ENCODE measurements at regions of chr1 and their contacts with region 1.

Region 1: DNA sequence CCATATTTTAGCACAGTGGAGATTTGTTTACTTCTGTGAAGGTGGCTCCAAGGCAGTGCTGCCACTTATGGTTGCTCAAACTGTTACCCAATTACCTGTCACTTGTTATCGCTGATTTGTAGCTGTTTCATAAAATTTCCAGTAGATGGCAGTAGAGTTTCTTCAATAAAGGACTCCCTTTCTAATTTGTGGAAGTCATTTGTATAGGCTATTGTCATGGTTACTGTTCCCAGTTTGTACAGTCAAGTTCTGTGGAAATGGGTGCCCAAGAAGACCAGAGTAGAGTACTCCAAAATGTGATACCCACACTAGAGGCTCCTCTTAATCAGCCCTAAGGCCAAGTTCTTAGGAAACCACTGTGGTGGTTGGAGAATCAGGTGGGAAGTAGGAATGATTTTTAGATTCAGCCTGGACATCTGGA is 186.1 kb downstream of the CLEC20A start:
- DNase-seq: no peak
- ATAC-seq: peak; percentile 81

Region 2: DNA sequence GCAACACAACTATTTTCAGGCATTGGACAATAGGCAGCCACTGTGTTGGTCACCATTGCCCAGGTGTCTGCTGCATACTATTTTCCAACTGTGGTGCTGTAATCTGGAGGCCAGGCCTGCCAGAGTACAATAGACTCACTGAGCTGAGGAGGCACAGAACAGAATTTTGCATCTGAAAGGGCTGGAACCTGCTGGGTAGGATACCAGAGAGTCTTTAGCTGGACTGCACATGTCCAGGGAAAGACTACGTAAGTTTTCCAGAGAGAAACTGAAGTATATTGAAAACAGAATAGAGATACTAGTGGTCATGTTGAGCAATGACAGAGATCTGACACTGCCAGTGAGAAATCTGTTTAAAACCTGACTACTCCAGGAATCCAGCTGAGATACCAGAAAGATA is 16.0 kb before region 1 on chr1:
- intact Hi-C with region 1: no loop called
- DNase-seq: no peak
- ATAC-seq: no peak

Region 3: GRCh38 chr1:178341261-178341956 is 30.7 kb after region 1 on chr1:
- intact Hi-C with region 1: loop called (anchors 2 kb)
- DNase-seq: peak; percentile 47
- ATAC-seq: peak; percentile 44

Region 4: DNA sequence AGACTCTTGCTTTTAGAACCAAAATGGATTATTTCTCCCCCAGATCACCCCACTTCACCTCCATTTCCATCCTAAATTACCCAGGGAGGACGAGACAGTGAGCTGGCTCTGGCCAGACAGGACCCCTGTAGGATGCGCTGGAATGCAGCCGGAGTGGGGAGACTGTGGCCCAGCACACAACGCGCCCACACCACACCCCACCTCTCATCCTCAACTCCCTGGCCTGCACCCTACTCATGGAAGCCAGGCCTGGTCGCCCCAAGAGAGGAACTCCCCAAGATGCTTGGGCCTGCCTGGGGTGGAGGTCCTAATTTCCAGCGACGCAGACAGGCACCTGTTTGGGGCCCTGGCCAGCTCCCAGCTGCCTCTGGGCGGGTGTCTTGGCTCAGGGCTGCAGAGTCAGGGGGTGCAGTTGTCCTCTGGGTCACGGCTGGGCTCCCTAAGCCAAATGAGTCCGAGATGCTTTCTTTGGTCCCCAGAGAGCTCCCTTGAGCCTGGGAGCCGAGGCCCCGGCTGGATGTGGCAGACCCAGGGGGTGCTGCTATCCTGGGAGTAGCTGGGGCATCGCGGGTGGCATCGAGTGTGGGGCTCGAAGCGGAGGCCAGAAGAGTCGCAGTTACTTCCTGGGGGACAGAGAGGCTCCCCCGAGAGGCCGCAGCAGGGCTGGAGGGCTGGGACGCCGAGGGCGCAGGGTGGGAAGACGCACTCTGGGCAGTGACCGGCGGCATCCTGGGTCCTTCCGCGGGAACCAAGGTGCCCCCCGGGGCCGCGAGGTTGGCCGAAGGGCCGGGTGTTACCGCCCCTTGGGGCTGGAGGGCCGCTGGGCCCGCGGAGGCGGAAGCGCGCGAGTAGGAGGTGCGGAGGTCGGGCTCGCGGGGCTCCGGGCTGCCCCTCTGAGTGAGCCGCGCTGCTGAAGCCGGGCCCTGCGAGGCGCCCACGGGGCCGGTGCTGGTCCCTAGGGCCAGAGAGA is 175.7 kb after region 1 on chr1:
- intact Hi-C with region 1: no loop called
- DNase-seq: no peak
- ATAC-seq: peak; percentile 52

Region 5: DNA sequence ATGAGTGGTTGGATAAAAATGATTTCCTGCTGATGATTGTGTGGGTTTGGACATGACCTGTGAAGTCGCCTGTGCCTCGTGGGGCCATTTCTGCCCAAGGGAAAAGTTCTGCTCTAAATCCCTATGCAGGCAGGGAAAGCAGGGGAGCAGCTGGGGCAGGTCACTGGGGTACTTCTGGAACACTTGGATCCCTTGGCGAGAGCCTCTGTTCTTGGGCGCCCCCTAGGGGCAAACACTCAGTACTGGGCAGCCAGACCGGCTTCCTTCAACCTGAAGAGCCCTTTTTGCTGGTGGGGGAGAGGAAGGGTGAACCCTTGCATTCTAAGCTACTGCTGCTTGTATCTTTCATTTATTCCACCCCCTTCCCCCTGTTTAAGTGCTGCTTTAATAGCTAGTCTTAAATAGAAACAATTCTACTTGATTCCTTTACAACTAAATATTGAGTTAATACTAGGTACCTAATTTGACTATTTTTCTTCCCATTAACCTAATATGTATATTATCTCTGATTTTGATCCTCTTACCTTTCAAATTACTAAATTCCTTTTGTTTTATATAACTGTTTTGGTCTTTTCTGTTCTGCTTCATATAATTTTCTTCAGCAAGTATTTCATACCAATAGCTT is 191.1 kb after region 1 on chr1:
- intact Hi-C with region 1: loop called (anchors 2 kb)
- DNase-seq: peak; percentile 78
- ATAC-seq: peak; percentile 75

Region 6: GRCh38 chr1:178532392-178532791 is 221.7 kb after region 1 on chr1:
- intact Hi-C with region 1: loop called (anchors 10 kb)
- DNase-seq: peak; percentile 90
- ATAC-seq: peak; percentile 49